ENCODE measurements at regions of chr20 and their contacts with region 1.

Region 1: DNA sequence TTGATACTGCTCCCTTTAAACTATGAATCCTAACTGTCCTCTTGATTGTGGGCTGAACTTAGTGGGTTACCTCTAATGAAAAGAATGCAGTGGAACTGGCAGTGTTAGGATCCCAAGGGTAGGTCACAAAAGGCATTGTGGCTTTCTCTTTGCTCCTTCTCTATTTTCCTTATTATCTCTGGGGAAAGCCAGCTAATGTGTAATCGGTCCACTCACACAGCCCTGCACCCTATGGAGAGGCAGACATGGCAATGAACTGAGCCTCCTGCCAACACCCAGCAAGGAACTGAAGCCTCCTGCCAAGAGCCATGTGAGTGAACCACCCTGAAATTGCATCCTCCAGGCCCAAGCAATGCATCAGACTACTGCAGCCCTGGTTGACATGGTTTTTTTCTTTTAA is 24.6 kb upstream of the ZNF133 start:
- DNase-seq: peak; percentile 80 to 94
- H3K4me3 ChIP-seq: no peak overlapping the region
- H3K27ac ChIP-seq: peak overlapping the region; percentile 58
- H3K4me1 ChIP-seq: peaks cover 42% of the 10 kb centered on the region
- H3K27me3 ChIP-seq: no peaks in the 10 kb centered on the region
- CTCF ChIP-seq: no peak

Region 2: DNA sequence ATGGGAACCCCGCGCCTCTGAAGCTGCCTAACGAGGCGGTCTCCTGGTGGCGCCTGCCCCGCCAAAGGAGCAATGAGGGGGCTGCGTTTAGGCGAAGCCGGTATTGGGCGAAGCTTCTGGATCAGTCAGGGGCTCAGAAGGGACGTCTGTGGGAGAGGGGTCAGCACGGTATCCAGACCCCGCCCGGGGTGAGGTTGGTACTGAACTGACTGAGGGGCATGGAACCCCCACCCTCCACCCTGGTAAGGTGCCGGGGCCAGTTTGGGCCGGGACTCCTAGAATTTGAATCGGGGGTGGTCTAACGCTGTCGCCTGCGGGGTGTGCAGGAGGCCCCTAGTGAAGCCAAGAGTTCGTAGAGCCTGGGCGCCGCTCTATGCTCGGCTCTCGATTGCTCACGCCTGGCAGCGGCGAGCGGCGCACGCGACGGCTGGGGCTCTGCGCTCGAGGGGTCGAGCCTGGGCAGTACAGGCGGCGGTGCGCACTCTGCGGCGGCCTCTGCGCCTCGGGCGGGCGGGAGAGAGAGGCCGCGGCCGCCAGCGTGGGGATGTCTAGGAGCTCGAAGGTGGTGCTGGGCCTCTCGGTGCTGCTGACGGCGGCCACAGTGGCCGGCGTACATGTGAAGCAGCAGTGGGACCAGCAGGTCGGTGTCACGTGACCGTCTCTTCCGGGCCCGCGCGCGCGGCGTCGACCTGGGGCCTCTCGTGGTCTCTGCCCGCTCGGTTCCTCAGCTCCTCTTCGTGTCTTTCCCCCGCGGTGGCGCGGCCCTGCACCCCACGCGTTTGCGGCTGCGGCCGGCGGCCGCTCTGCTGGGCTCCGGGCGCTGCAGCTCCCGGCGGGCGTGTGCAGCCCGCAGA is 126.1 kb before region 1 on chr20 and contains the starts of genes KAT14 and PET117:
- CTCF ChIA-PET with region 1: interaction called, 10 read pairs
- POLR2A ChIA-PET with region 1: no interaction called
- intact Hi-C with region 1: no loop called
- DNase-seq: peak; percentile 74 to 94
- H3K4me3 ChIP-seq: peak within 1 kb of the TSS; percentile 96
- H3K27ac ChIP-seq: peak within 1 kb of the TSS; percentile 64
- H3K4me1 ChIP-seq: peaks cover 24% of the 10 kb centered on the region
- H3K27me3 ChIP-seq: no peaks in the 10 kb centered on the region
- CTCF ChIP-seq: no peak
- total RNA-seq, gene KAT14: 28.4 and 30.6 TPM in 2 replicates
- total RNA-seq, gene PET117: 27.5 and 34.7 TPM in 2 replicates

Region 3: DNA sequence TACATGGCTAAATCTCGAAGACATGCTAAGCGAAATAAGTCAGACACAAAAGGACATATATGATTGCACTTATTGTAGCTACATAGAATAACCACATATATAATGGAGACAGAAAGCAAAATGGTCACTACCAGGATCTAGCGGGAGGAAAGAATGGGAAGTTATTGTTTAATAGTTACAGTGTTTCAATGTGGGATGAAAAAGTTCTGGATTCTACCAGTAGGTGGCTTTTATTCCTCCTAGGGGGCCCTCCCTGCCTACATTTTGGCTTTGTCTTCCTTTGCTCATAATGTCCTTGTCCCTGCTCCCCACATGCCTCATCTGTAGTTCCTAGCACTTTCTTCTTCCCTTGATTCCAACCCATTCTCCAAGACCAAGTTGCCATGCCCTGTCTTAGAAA is 40.9 kb after region 1 on chr20:
- CTCF ChIA-PET with region 1: no interaction called
- POLR2A ChIA-PET with region 1: no interaction called
- intact Hi-C with region 1: no loop called
- DNase-seq: no peak
- H3K4me3 ChIP-seq: no peak overlapping the region
- H3K27ac ChIP-seq: no peak overlapping the region
- H3K4me1 ChIP-seq: no peaks in the 10 kb centered on the region
- H3K27me3 ChIP-seq: no peaks in the 10 kb centered on the region
- CTCF ChIP-seq: peak; percentile 45; the same call in 1 of the 2 replicates